ENCODE measurements at regions of chr10 and their contacts with region 1.

Region 1: DNA sequence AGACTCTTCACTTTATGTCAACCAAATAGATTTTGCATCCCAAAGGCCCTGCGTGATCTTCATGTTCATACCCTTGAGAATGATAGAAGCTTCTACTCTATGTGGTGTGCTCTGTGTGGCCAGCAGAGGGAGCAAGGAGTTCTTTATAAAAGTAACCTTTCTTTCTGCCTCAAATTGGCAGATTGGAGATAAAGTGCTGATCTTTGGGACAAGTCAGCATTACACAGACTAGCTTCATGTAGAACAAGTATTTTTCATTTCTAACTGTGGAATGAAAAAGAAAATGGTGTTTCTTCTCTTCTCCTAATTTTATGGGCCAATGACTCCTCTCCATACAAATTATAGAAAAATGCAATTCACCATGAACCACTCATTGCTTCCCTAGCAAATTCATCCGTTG is 1214.1 kb downstream of the SORCS1 start:
- DNase-seq: peak; percentile 68
- H3K4me3 ChIP-seq: no peak overlapping the region
- H3K27ac ChIP-seq: peak overlapping the region in 2 of 4 donors; percentile 83 to 86
- H3K4me1 ChIP-seq: peaks cover 0 to 30% (median 9%) of the 10 kb centered on the region in 4 donors
- H3K27me3 ChIP-seq: no peaks in the 10 kb centered on the region
- CTCF ChIP-seq: peak; percentile 18 to 83 (median 62)
- EP300 ChIP-seq: no peak
- POLR2A ChIP-seq: no peak

Region 2: DNA sequence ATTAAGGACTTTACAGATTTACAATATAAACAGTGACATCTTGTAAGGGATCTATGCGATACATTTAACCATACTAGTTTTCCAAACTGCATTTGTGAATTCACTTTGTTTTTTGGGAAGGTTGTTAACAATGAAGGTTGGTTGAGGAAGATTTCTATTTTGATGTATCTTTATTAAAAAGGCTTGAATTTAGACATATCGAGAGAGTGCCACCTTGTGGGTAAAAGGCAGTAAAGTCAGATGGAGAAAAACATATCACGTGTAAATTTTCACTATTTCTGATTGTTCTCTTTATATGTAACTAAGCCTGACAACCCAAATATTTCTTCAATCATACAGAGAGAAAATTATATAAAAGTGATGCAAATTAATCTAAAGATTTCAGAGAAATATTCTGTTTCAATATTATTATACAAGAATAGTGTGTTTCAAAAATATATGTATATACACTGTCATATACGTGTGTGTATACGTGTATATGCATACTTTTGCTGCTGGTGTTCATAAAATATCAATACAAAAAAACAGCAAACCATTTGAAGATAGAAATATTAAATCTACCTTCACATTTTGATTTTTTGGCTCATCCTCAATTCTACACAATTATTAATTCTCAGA is 225.5 kb after region 1 on chr10:
- intact Hi-C with region 1: loop called (anchors 10 kb)
- DNase-seq: no peak
- H3K4me3 ChIP-seq: no peak overlapping the region
- H3K27ac ChIP-seq: no peak overlapping the region
- H3K4me1 ChIP-seq: no peaks in the 10 kb centered on the region
- H3K27me3 ChIP-seq: no peaks in the 10 kb centered on the region
- CTCF ChIP-seq: peak in 1 of 4 experiments; percentile 12
- EP300 ChIP-seq: no peak
- POLR2A ChIP-seq: no peak

Measured in sigmoid colon (tissue), 7 donors.